CD4-positive, alpha-beta T cell (primary cell): ENCODE measurements at regions of chr2 and their contacts with region 1.

Region 1: DNA sequence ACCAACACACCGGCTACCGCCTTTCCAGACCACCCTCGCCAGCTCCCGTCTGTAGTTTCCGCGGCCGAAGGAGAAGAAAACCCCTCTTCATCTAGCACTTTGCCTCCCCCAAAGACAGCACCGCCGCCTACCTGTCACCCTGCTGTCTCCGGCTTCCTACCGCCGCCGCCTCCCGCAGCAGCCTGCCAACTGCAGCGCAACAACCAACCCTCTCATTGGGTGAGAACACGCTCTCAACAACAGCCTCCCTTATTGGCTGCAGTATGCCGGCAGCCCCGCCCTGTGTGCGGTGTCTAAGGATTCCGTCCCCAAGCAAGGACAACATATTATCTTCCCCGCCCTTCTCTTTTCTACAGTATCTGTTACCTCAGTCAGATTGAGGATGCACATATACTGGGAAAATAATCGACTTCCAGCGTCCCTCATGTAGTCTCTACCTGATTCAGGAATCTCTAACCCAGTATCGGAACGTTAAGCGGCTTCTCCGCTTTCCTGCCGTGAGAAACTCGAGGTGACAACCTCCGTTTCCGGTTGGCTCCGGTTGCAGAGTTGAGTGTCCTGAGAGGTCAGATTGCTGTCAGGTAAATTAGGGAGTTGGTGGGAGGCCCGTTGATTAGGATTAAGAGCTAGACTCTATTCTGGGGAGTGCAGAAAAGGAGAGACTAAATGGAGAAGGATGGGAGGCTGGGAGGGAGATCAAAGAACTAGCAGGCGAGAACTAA is at the starts of genes HYCC2 and NDUFB3:
- DNase-seq: peak; percentile 85 to 98 (median 90)
- ATAC-seq: peak; percentile 92
- H3K4me3 ChIP-seq: peak within 1 kb of the TSS; percentile 87
- H3K4me3 Mint-ChIP-seq: peak within 1 kb of the TSS; percentile 99
- H3K27ac ChIP-seq: peak within 1 kb of the TSS; percentile 84 to 93
- H3K27ac Mint-ChIP-seq: peak within 1 kb of the TSS; percentile 97
- H3K4me1 ChIP-seq: peaks cover 18% of the 10 kb centered on the region
- H3K4me1 Mint-ChIP-seq: peaks cover 50% of the 10 kb centered on the region
- H3K27me3 ChIP-seq: no peaks in the 10 kb centered on the region
- H3K27me3 Mint-ChIP-seq: no peaks in the 10 kb centered on the region
- CTCF ChIP-seq: peak; percentile 39
- total RNA-seq, gene HYCC2: 29.2 to 30.7 TPM
- total RNA-seq, gene NDUFB3: 10.1 to 13.6 TPM

Region 2: DNA sequence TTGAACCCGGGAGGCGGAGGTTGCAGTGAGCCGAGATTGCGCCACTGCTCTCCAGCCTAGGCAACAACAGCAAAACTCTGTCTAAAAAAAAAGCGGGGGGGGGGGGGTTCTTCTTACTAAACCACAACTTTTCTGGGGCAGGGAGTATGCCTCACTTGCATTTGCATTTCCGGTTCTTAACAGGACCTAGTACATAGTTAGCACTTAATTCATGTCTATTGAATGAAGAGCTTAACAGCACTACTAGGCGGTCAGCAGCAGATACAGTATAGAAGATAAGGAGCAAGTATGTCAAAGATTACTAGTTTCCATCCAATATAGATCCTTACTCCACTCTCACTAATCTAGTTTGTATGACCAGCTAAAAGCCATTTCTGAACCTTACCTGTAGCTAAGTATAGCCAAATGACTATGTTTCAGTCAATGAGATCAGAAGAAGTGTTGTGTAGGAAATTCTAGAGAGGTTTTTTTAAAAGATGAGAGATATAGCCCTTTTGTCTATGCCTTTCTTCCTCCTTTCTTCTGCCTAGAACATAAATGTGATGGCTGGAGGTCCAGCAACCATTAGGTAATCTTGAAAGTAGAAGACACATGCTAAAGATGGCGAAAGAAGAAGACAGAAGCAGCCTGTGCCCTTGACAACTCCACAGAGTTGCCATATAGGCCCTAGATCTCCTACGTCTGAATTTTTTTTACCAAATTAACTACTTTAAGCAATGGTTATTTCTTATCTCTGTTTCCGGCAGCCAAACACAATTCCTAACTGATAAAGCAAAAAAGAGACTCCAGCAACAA is 11.5 kb before region 1 on chr2:
- CTCF ChIA-PET with region 1: interaction called, 11 read pairs
- POLR2A ChIA-PET with region 1: interaction called, 4 read pairs
- intact Hi-C with region 1: no loop called
- DNase-seq: peak in 2 of 14 experiments; percentile 15 to 44
- ATAC-seq: peak; percentile 29
- H3K4me3 ChIP-seq: no peak overlapping the region
- H3K4me3 Mint-ChIP-seq: no peak overlapping the region
- H3K27ac ChIP-seq: no peak overlapping the region
- H3K27ac Mint-ChIP-seq: peak overlapping the region; percentile 32
- H3K4me1 ChIP-seq: peaks cover 9% of the 10 kb centered on the region
- H3K4me1 Mint-ChIP-seq: peaks cover 57% of the 10 kb centered on the region
- H3K27me3 ChIP-seq: no peaks in the 10 kb centered on the region
- H3K27me3 Mint-ChIP-seq: no peaks in the 10 kb centered on the region
- CTCF ChIP-seq: no peak

Region 3: DNA sequence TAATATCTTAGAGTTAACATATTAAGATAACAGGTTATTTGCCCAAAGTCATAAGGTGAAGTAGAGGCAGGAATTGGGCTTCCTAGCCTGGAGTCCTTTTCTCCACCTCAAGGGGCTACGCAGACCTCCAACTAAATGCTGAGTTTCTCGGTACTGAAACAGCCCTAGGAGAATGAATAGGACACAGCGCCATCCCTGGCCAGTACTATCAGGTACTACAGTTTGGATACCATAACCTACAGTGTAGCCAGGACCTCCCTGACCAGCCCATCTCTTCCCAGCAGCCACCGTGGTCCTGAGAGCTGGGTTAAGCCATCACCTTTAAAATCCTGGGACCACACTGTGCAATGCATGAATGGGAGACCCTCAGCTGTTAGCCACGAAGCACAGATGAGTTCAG is 204.3 kb after region 1 on chr2:
- CTCF ChIA-PET with region 1: no interaction called
- POLR2A ChIA-PET with region 1: no interaction called
- intact Hi-C with region 1: no loop called
- DNase-seq: no peak
- ATAC-seq: no peak
- H3K4me3 ChIP-seq: no peak overlapping the region
- H3K4me3 Mint-ChIP-seq: no peak overlapping the region
- H3K27ac ChIP-seq: no peak overlapping the region
- H3K27ac Mint-ChIP-seq: peak overlapping the region; percentile 70
- H3K4me1 ChIP-seq: peaks cover 37% of the 10 kb centered on the region
- H3K4me1 Mint-ChIP-seq: peaks cover 72% of the 10 kb centered on the region
- H3K27me3 ChIP-seq: no peaks in the 10 kb centered on the region
- H3K27me3 Mint-ChIP-seq: no peaks in the 10 kb centered on the region
- CTCF ChIP-seq: no peak